Esophagus squamous epithelium (tissue), 5 donors: ENCODE measurements at regions of chr4 and their contacts with region 1.

Region 1: GRCh38 chr4:81351654-81352445 is 119.9 kb downstream of the RASGEF1B start:
- DNase-seq: no peak
- H3K4me3 ChIP-seq: no peak overlapping the region
- H3K27ac ChIP-seq: no peak overlapping the region
- H3K4me1 ChIP-seq: no peaks in the 10 kb centered on the region
- H3K27me3 ChIP-seq: no peaks in the 10 kb centered on the region
- CTCF ChIP-seq: peak; percentile 63 to 87 (median 72)
- POLR2A ChIP-seq: no peak

Region 2: GRCh38 chr4:81069706-81070331 is 282.0 kb before region 1 on chr4:
- intact Hi-C with region 1: loop called (anchors 5 kb)
- DNase-seq: no peak
- H3K4me3 ChIP-seq: no peak overlapping the region
- H3K27ac ChIP-seq: no peak overlapping the region
- H3K4me1 ChIP-seq: no peaks in the 10 kb centered on the region
- H3K27me3 ChIP-seq: peaks cover 0 to 1% (median 0%) of the 10 kb centered on the region in 4 donors
- CTCF ChIP-seq: peak; percentile 40 to 94 (median 82)
- POLR2A ChIP-seq: no peak